ENCODE measurements at regions of chr14 and their contacts with region 1.

Region 1: GRCh38 chr14:74275241-74275841 is 27.4 kb downstream of the ABCD4 start:
- DNase-seq: no peak
- H3K4me3 ChIP-seq: no peak overlapping the region
- H3K27ac ChIP-seq: no peak overlapping the region
- H3K4me1 ChIP-seq: no peaks in the 10 kb centered on the region
- H3K27me3 ChIP-seq: no peaks in the 10 kb centered on the region; a peak in 1 of 7 replicates
- CTCF ChIP-seq: no peak
- EP300 ChIP-seq: no peak
- POLR2A ChIP-seq: no peak
- RAD21 ChIP-seq: no peak

Region 2: GRCh38 chr14:74140374-74140850 is 134.9 kb before region 1 on chr14:
- CTCF ChIA-PET with region 1: no interaction called
- POLR2A ChIA-PET with region 1: no interaction called
- DNase-seq: no peak
- H3K4me3 ChIP-seq: no peak overlapping the region
- H3K27ac ChIP-seq: no peak overlapping the region
- H3K4me1 ChIP-seq: no peaks in the 10 kb centered on the region
- H3K27me3 ChIP-seq: no peaks in the 10 kb centered on the region
- CTCF ChIP-seq: no peak
- EP300 ChIP-seq: no peak
- POLR2A ChIP-seq: no peak
- RAD21 ChIP-seq: no peak

Region 3: DNA sequence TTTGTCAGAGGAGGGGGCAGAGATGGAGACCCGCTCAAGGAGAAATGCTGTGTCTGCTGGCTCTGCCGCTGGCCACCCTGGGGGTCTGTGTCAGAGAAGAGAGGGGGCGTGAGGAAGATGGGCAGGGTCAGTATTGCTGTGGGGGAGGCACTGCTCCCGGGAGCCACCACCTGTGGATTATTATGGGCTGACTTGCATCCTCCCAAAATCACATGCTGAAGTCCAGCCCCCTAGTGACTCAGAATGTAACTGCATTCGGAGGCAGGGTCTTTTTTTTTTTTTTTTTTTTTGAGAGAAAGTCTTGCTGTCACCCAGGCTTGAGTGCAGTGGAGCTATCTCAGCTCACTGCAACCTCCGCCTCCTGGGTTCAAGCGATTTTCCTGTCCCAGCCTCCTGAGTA is 15.1 kb after region 1 on chr14:
- CTCF ChIA-PET with region 1: interaction called, 214 read pairs
- POLR2A ChIA-PET with region 1: interaction called, 11 read pairs
- DNase-seq: no peak
- H3K4me3 ChIP-seq: no peak overlapping the region
- H3K27ac ChIP-seq: no peak overlapping the region
- H3K4me1 ChIP-seq: 0 out of 7 replicates have a peak, but pooled peaks cover 0 to 2% (median 0%) of the 10 kb centered on the region in 4 experiments
- H3K27me3 ChIP-seq: no peaks in the 10 kb centered on the region
- CTCF ChIP-seq: peak; percentile 32 to 55 (median 52)
- EP300 ChIP-seq: no peak
- POLR2A ChIP-seq: no peak
- RAD21 ChIP-seq: peak; percentile 38 to 41; a peak in 3 of 4 replicates

Region 4: GRCh38 chr14:74302634-74303577 is 27.6 kb after region 1 on chr14 and contains the start of gene ABCD4:
- CTCF ChIA-PET with region 1: interaction called, 214 read pairs
- POLR2A ChIA-PET with region 1: interaction called, 5 read pairs
- DNase-seq: peak; percentile 90 to 99
- H3K4me3 ChIP-seq: peak within 1 kb of the TSS; percentile 76 to 99 (median 80)
- H3K27ac ChIP-seq: peak within 1 kb of the TSS; percentile 46; the same call in 1 of the 2 replicates
- H3K4me1 ChIP-seq: no peaks in the 10 kb centered on the region
- H3K27me3 ChIP-seq: no peaks in the 10 kb centered on the region
- CTCF ChIP-seq: peak; percentile 57 to 70 (median 63)
- EP300 ChIP-seq: 0 out of 3 replicates have a peak, but pooled peaks of 1 of the 2 experiments have one; percentile 60
- POLR2A ChIP-seq: peak; percentile 98 to 100
- RAD21 ChIP-seq: 0 out of 4 replicates have a peak, but pooled peaks of 1 of the 2 experiments have one; percentile 8
- total RNA-seq, gene ABCD4: 84.8 and 97.7 TPM in 2 replicates